A673 (cell line): ENCODE measurements at regions of chr1 and their contacts with region 1.

Region 1: GRCh38 chr1:247172996-247173395 is 1.2 kb upstream of the ZNF124 start:
- DNase-seq: no peak
- H3K4me3 ChIP-seq: no peak overlapping the region
- H3K27ac ChIP-seq: no peak overlapping the region
- H3K4me1 ChIP-seq: no peaks in the 10 kb centered on the region
- H3K27me3 ChIP-seq: no peaks in the 10 kb centered on the region
- CTCF ChIP-seq: no peak

Region 2: DNA sequence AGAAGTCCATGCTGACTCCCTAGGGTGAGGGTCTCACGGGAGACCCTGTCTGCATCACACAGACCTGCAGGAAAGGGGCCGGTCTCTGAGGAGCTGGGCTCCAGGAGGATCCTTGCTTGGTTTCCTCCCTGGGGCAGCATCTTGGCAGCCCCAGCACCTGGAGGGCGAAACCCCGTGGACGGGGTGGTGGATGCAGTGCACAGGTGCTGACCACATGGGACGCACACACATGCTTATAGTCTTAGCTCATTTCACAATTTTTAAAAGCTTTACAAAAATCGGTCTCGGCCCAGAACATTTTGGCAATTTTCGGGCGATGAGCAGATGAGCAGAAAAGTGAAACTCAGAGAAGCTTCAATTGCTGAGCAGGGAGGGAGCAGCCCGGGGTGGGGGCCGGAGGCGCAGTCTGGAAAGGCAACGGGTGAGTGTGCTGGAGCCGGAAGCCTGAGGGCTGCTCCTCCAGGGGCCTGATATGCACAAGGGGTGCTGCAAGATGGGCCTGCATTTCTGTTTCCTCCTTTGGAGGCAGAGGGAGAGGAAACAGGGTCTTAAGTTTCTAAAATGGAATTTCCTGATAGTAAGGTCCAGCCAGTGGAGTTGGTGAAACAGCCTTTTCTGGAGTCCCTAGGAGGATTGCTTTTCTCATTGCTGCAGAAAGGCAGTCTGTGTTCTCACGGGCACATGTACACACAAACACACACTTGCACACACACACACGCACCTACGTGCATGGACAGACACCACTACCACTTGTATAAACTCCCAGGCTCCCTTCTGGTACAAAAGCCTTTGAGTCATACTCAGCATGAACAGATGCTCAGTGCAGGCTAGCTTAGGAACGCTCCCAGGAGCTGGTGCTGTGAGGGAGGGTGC is 388.1 kb before region 1 on chr1:
- CTCF ChIA-PET with region 1: no interaction called
- POLR2A ChIA-PET with region 1: no interaction called
- intact Hi-C with region 1: no loop called
- DNase-seq: peak; percentile 24
- H3K4me3 ChIP-seq: no peak overlapping the region
- H3K27ac ChIP-seq: no peak overlapping the region
- H3K4me1 ChIP-seq: no peaks in the 10 kb centered on the region
- H3K27me3 ChIP-seq: no peaks in the 10 kb centered on the region
- CTCF ChIP-seq: no peak

Region 3: GRCh38 chr1:247131236-247131635 is 41.8 kb before region 1 on chr1:
- CTCF ChIA-PET with region 1: no interaction called
- POLR2A ChIA-PET with region 1: no interaction called
- intact Hi-C with region 1: loop called (anchors 2 kb)
- DNase-seq: no peak
- H3K4me3 ChIP-seq: no peak overlapping the region
- H3K27ac ChIP-seq: no peak overlapping the region
- H3K4me1 ChIP-seq: no peaks in the 10 kb centered on the region
- H3K27me3 ChIP-seq: no peaks in the 10 kb centered on the region
- CTCF ChIP-seq: no peak